AG04450 (cell line): ENCODE measurements at regions of chr12 and their contacts with region 1.

Region 1: GRCh38 chr12:13223179-13223859 is 26.8 kb downstream of the EMP1 start:
- DNase-seq: peak; percentile 69
- H3K4me3 ChIP-seq: no peak overlapping the region
- H3K27ac ChIP-seq: peak overlapping the region; percentile 83
- H3K27me3 ChIP-seq: no peaks in the 10 kb centered on the region
- CTCF ChIP-seq: no peak

Region 2: DNA sequence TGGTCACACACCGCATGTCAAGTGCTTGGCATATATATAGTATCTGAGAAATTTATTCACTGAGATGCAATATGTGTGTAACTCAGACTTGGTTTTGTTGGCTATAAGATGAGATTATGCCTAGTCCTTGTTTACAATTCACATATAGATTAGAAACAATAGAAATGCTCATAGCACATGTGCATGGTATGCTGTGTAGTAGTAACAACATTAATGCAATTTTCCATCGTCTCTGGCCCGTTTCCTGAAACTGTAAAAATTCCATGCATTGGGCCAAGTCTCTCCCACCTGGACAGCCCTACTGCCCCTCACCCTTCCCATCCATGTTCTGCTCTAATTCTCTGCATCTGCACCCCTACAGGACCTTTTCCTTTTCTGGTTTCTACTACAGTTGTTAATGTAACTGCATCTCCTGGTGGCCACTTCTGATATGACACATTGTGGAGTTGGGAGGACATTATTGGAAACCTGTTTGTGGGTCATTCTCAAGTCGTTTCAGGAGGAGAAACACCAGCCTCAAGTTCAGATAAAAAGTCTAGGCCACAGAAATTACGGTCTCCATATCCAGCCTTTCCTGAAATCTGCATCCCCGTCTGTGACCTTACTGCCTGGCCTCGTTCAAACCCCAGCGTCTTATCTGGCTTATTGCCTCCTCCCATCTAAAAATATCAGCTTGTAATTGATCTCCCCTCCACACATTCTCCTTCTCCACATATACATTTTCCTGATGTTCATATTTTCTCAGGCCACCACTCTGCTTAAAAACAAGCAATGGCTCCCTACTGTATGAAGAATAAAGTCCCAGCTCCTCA is 10.7 kb after region 1 on chr12:
- CTCF ChIA-PET with region 1: interaction called, 17 read pairs
- POLR2A ChIA-PET with region 1: interaction called, 3 read pairs
- DNase-seq: no peak
- H3K4me3 ChIP-seq: no peak overlapping the region
- H3K27ac ChIP-seq: no peak overlapping the region
- H3K27me3 ChIP-seq: no peaks in the 10 kb centered on the region
- CTCF ChIP-seq: peak; percentile 94